ENCODE measurements at regions of chr10 and their contacts with region 1.

Region 1: DNA sequence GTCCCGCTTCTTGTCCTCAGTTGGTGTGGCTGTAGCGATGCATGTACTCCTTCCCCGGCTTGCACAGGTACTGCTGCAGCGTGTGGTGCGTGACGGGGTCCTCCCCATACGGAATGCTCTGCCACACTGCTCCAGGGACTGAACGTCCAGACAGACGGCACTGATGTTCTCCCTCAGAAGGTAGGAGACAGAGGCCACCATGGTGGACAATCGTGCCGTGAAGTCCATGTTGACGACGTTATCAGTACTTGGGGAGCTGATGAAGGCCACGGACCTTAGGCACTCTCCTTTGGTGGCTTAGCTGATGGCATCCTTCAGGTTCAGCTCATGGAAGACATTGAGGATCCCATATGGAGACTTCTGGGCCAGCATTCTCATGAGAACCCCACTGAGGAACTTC is 37.4 kb downstream of the AGAP6 start:
- DNase-seq: no peak
- ATAC-seq: no peak
- H3K4me3 Mint-ChIP-seq: no peak overlapping the region
- H3K27ac Mint-ChIP-seq: no peak overlapping the region
- H3K4me1 Mint-ChIP-seq: no peaks in the 10 kb centered on the region
- H3K27me3 Mint-ChIP-seq: peaks cover 29% of the 10 kb centered on the region

Region 2: GRCh38 chr10:50152792-50153272 is 127.2 kb after region 1 on chr10:
- CTCF ChIA-PET with region 1: no interaction called
- POLR2A ChIA-PET with region 1: no interaction called
- intact Hi-C with region 1: loop called in 1 of 2 experiments (anchors 1 kb)
- DNase-seq: peak; percentile 9
- ATAC-seq: peak; percentile 19
- H3K4me3 Mint-ChIP-seq: no peak overlapping the region
- H3K27ac Mint-ChIP-seq: no peak overlapping the region
- H3K4me1 Mint-ChIP-seq: no peaks in the 10 kb centered on the region
- H3K27me3 Mint-ChIP-seq: peaks cover 14% of the 10 kb centered on the region

Region 3: GRCh38 chr10:50347394-50347802 is 321.8 kb after region 1 on chr10:
- CTCF ChIA-PET with region 1: no interaction called
- POLR2A ChIA-PET with region 1: no interaction called
- intact Hi-C with region 1: no loop called
- DNase-seq: no peak
- ATAC-seq: no peak
- H3K4me3 Mint-ChIP-seq: no peak overlapping the region
- H3K27ac Mint-ChIP-seq: no peak overlapping the region
- H3K4me1 Mint-ChIP-seq: peaks cover 10% of the 10 kb centered on the region
- H3K27me3 Mint-ChIP-seq: no peaks in the 10 kb centered on the region

Measured in activated CD4-positive, alpha-beta T cell treated with anti-CD3 and anti-CD28 coated beads for 36 hours (primary cell).